Breast epithelium (tissue), 4 donors: ENCODE measurements at regions of chr5 and their contacts with region 1.

Region 1: GRCh38 chr5:180193749-180194375 is 15.1 kb downstream of the RASGEF1C start:
- DNase-seq: no peak
- H3K4me3 ChIP-seq: no peak overlapping the region
- H3K27ac ChIP-seq: no peak overlapping the region
- H3K4me1 ChIP-seq: no peaks in the 10 kb centered on the region
- H3K27me3 ChIP-seq: peaks cover 0 to 8% of the 10 kb centered on the region in 2 donors
- CTCF ChIP-seq: no peak
- POLR2A ChIP-seq: no peak

Region 2: DNA sequence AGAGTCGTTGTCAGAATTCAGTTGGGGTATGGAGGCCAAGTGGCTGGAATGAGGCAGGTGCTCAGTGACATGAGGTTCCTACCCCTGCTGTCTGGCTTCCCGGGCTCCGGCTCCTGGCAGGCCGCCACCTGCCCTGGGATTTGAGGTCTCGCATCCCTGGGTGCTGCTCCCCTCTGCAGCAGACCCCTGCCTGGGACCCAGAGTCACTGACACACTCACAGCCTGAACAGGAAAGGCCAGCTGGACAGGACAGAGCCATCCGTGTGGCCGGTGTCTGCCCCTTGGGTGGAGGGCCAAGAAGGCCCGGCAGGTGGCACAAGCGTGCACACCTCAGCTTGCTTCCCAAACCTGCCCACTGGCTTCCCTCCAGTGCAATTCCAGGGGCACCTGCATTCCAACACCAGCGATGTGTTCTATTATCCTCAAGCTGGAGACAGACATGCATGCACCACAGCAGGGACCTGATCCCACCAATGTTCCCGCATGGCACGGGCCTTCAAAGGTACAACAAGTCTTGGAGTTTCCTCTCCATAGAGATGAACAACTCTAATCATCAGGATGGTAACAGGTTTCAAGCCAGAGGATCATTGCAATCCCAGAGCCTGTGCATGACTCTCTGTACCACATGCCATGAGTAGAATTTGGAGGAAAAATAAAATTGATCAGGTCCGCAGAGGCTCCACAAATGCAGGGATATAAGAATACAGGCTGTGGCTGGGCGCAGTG is 76.7 kb before region 1 on chr5:
- intact Hi-C with region 1: loop called (anchors 2 kb)
- DNase-seq: peak in 1 of 2 donors; percentile 47
- H3K4me3 ChIP-seq: no peak overlapping the region
- H3K27ac ChIP-seq: no peak overlapping the region
- H3K4me1 ChIP-seq: no peaks in the 10 kb centered on the region
- H3K27me3 ChIP-seq: peaks cover 0 to 9% of the 10 kb centered on the region in 2 donors
- CTCF ChIP-seq: peak in 2 of 3 donors; percentile 24 to 25
- POLR2A ChIP-seq: no peak

Region 3: DNA sequence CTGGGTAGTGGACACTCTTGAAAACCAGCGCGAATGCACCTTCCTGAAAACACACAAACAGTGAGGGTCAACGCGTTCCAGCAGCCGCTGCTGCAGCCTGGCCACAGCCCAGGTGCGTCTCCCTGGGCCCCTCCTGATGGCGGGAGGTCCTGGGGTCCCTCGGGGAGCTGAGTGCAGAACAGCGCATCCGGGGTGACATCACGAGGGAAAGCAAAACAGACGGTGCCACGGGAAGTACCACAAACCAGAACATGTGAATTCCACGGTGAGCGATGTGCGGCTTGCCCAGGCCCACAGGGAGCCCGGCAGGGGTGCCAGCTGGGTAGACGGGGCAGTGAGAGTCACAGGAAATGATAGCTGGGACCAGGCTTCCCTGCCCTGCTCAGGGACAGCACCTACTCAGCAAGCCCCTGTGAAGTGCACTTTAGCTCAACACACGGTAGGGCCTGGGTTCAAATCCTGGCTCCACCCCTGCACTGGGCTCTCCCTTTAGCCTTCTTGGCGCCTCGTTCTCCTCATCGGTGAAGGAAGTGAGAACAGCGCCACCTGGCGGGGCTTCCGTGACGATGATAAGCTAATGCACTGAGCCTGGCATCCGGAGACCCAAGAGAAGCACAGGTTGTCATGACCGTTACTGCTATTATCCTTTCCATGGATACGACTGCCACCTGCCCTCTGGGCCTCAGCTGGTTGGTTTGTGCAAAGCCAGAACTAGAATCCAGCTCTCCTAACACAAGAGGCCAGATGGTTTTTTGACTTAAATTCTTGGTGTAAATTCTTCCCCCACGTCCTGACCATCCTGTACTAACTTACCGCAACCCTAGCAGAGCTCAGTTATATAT is 134.7 kb after region 1 on chr5:
- intact Hi-C with region 1: no loop called
- DNase-seq: peak; percentile 37 to 77
- H3K4me3 ChIP-seq: peak overlapping the region in 1 of 3 donors; percentile 9
- H3K27ac ChIP-seq: peak overlapping the region in 1 of 2 donors; percentile 40
- H3K4me1 ChIP-seq: no peaks in the 10 kb centered on the region
- H3K27me3 ChIP-seq: no peaks in the 10 kb centered on the region
- CTCF ChIP-seq: peak; percentile 5 to 67 (median 61)
- POLR2A ChIP-seq: no peak